ENCODE measurements at regions of chr10 and their contacts with region 1.

Region 1: DNA sequence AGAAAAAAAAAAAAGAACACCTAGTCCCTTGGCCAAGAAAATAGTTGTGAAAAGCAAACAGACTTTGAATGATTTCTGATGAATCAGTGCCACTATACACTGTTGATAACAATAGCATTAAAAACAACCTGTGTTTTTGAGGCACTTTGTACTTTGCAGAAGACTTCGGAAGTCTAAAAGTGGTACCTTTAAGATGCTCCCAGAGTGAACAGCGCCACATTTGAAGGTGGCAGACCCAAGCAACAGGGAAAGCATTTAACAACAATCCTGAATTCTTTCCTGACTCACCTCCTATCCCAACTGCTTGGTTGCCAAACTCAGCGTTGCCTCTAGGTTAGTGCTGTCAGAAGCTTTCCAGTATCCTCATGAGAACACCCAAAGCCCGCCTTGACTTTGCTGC is 102.5 kb upstream of the CCDC6 start:
- DNase-seq: no peak
- H3K4me3 ChIP-seq: no peak overlapping the region
- H3K27ac ChIP-seq: no peak overlapping the region
- H3K4me1 ChIP-seq: peaks cover 0 to 8% (median 6%) of the 10 kb centered on the region in 4 experiments; a peak in 4 of 7 replicates
- H3K27me3 ChIP-seq: no peaks in the 10 kb centered on the region
- CTCF ChIP-seq: no peak
- EP300 ChIP-seq: no peak
- POLR2A ChIP-seq: no peak
- RAD21 ChIP-seq: no peak

Region 2: GRCh38 chr10:59976909-59977308 is 31.9 kb before region 1 on chr10:
- CTCF ChIA-PET with region 1: no interaction called
- POLR2A ChIA-PET with region 1: no interaction called
- DNase-seq: no peak
- H3K4me3 ChIP-seq: no peak overlapping the region
- H3K27ac ChIP-seq: no peak overlapping the region
- H3K4me1 ChIP-seq: no peaks in the 10 kb centered on the region
- H3K27me3 ChIP-seq: no peaks in the 10 kb centered on the region
- CTCF ChIP-seq: no peak
- EP300 ChIP-seq: no peak
- POLR2A ChIP-seq: no peak
- RAD21 ChIP-seq: no peak

Region 3: DNA sequence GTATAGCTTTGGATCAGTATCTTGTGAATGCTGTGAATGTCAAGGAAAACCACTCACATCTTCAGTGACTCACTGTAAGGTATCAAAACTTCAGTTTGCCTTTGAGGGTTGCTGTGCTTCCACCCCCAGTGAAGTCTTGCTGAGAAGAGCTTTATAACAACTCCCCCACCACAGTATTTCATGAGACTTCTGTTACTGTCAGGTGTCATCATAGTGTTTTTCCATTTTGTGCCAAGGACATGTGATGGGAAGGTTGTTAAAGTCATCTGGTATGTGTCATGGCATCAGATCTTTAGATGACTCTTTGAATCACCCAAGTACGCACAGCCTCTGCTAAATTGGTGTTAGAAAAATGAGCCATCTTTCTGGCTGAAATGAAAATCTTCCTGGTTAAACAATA is 12.5 kb after region 1 on chr10:
- CTCF ChIA-PET with region 1: interaction called, 12 read pairs
- POLR2A ChIA-PET with region 1: interaction called, 6 read pairs
- DNase-seq: no peak
- H3K4me3 ChIP-seq: no peak overlapping the region
- H3K27ac ChIP-seq: no peak overlapping the region
- H3K4me1 ChIP-seq: no peaks in the 10 kb centered on the region
- H3K27me3 ChIP-seq: no peaks in the 10 kb centered on the region
- CTCF ChIP-seq: no peak
- EP300 ChIP-seq: no peak
- POLR2A ChIP-seq: no peak
- RAD21 ChIP-seq: no peak

Region 4: GRCh38 chr10:60189861-60190475 is 181.2 kb after region 1 on chr10:
- CTCF ChIA-PET with region 1: no interaction called
- POLR2A ChIA-PET with region 1: no interaction called
- DNase-seq: no peak
- H3K4me3 ChIP-seq: no peak overlapping the region
- H3K27ac ChIP-seq: no peak overlapping the region
- H3K4me1 ChIP-seq: no peaks in the 10 kb centered on the region
- H3K27me3 ChIP-seq: no peaks in the 10 kb centered on the region
- CTCF ChIP-seq: no peak
- EP300 ChIP-seq: no peak
- POLR2A ChIP-seq: no peak
- RAD21 ChIP-seq: no peak

Measured in H1 (cell line).